ENCODE measurements at regions of chr7 and their contacts with region 1.

Region 1: DNA sequence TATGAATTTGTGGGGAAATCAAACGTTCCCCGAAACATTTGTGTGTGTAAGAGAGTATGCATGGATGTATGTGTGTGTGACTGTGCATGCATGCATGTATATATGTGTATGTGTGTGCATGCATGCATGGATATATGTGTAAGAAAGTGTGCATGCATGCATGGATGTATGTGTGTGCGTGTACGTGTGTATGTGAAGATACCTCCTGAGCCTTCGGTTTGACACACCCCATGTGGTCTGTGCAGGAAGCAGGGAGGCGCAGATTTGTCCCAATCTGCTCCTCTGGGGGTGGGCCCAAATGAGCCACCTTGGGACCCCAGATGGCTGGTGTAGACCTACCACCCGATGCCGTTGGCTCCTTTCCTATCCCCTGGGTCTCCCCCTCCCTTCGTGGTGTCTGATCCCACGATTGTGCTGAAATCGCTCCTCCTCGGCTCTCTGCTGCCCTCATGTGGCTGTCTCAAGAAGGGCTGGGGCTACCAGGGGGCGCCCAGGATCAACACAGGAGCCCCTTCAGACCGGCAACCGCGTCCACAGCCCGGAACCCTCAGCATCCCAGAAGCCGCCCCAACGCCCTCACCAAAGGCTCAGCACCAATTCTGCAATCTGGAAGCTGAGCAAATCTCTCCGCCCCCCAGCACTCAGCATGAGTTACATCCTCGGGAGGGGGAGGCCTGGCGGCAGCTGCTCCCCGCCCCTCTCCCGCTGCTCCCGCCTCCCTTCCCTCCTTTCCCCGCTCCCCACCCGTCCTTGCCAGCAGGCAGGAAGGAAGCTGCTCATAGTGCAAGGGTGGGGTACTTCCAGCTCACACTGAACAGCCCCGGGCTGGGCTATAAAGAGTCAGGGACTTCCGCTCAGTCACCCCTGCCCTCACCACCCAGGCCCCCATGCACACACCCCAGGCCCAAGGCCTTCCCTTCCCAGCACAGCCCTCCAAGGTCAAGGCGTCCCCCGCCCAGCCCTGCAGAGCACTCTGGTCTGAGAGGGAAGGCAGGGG is 2.3 kb upstream of the NOS3 start:
- DNase-seq: peak in 9 of 10 donors; percentile 63 to 96 (median 73)

Region 2: GRCh38 chr7:150778738-150779301 is 209.7 kb before region 1 on chr7:
- intact Hi-C with region 1: loop called (anchors 5 kb)
- DNase-seq: peak; percentile 67 to 97 (median 86)

Region 3: DNA sequence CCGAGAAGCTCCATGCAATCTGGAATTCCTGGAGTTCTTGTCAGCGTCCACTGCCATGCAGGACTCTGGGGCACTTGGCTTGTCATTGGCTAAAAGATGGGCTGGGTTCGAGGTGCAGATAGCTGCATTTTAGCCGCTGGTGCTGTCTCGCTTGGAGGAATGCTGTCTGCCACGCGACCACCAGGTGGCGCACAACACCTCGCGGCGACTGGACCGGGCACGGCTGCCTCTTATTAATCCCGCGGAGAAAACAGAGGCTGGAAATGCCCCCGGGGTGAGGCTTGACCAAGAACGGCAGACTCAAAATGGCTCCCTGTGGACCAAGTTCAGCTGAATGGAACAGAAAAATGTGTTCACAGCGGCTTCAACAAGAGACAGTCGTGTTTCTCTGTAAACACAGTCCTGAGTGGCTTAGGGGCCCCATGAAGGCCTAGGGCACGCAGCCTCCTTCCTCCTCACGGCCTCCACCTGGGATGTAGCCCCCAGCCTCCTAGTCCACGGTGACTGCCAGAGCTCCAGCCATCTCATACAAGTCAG is 90.0 kb before region 1 on chr7:
- intact Hi-C with region 1: loop called (anchors 1 kb)
- DNase-seq: peak; percentile 71 to 98 (median 86)

Region 4: GRCh38 chr7:150962553-150963399 is 25.8 kb before region 1 on chr7:
- intact Hi-C with region 1: loop called (anchors 1 kb)
- DNase-seq: peak in 9 of 10 donors; percentile 59 to 96 (median 73)

Region 5: GRCh38 chr7:151057989-151058780 is 69.7 kb after region 1 on chr7:
- intact Hi-C with region 1: no loop called
- DNase-seq: peak; percentile 97 to 100 (median 100)